ENCODE measurements at regions of chr11 and their contacts with region 1.

Region 1: DNA sequence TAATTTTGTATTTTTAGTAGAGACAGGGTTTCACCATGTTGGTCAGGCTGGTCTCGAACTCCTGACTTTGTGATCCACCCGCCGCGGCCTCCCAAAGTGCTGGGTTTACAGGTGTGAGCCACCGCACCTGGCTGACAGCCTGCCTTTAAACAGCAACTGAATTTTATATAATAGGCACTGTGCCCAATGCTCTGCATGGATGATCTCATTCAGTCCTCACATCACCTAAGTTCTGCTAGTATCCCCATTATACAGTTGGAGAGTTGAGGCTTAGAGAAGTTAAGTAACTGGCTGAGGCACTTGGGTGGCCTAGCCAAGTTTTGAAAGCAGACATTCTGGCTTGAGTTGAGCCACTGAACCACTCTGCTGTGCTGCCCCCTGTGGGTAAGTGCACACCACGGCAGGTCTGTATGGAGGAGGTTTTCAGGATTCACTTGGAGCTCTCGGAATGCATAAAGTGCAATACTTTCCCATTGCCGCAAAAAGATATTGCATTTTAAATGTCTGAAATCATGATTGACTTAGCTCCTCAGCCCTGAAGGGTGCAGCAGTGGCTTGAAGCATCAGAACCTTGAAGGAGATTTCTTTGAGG is 112.4 kb downstream of the LDLRAD3 start:
- DNase-seq: peak; percentile 58
- H3K4me3 ChIP-seq: no peak overlapping the region
- H3K27ac ChIP-seq: no peak overlapping the region
- H3K4me1 ChIP-seq: peaks cover 18% of the 10 kb centered on the region
- H3K27me3 ChIP-seq: no peaks in the 10 kb centered on the region
- CTCF ChIP-seq: peak; percentile 69 to 73
- POLR2A ChIP-seq: no peak

Region 2: GRCh38 chr11:35907648-35908431 is 148.4 kb before region 1 on chr11:
- CTCF ChIA-PET with region 1: no interaction called
- POLR2A ChIA-PET with region 1: no interaction called
- dilution Hi-C with region 1: no loop called
- intact Hi-C with region 1: no loop called
- DNase-seq: peak; percentile 82
- H3K4me3 ChIP-seq: no peak overlapping the region
- H3K27ac ChIP-seq: peak overlapping the region; percentile 16
- H3K4me1 ChIP-seq: peaks cover 26% of the 10 kb centered on the region
- H3K27me3 ChIP-seq: no peaks in the 10 kb centered on the region
- CTCF ChIP-seq: no peak
- POLR2A ChIP-seq: no peak

Region 3: GRCh38 chr11:36041988-36042611 is 14.2 kb before region 1 on chr11:
- CTCF ChIA-PET with region 1: interaction called, 25 read pairs
- POLR2A ChIA-PET with region 1: interaction called, 4 read pairs
- dilution Hi-C with region 1: no loop called
- intact Hi-C with region 1: no loop called
- DNase-seq: peak; percentile 29
- H3K4me3 ChIP-seq: no peak overlapping the region
- H3K27ac ChIP-seq: no peak overlapping the region
- H3K4me1 ChIP-seq: no peaks in the 10 kb centered on the region
- H3K27me3 ChIP-seq: no peaks in the 10 kb centered on the region
- CTCF ChIP-seq: peak; percentile 44 to 45
- POLR2A ChIP-seq: no peak

Region 4: GRCh38 chr11:36116161-36116560 is 59.9 kb after region 1 on chr11:
- CTCF ChIA-PET with region 1: interaction called, 6 read pairs
- POLR2A ChIA-PET with region 1: no interaction called
- dilution Hi-C with region 1: no loop called
- intact Hi-C with region 1: loop called (anchors 1 kb)
- DNase-seq: peak; percentile 88
- H3K4me3 ChIP-seq: no peak overlapping the region
- H3K27ac ChIP-seq: peak overlapping the region; percentile 76
- H3K4me1 ChIP-seq: peaks cover 26% of the 10 kb centered on the region
- H3K27me3 ChIP-seq: no peaks in the 10 kb centered on the region
- CTCF ChIP-seq: no peak
- POLR2A ChIP-seq: no peak

Region 5: DNA sequence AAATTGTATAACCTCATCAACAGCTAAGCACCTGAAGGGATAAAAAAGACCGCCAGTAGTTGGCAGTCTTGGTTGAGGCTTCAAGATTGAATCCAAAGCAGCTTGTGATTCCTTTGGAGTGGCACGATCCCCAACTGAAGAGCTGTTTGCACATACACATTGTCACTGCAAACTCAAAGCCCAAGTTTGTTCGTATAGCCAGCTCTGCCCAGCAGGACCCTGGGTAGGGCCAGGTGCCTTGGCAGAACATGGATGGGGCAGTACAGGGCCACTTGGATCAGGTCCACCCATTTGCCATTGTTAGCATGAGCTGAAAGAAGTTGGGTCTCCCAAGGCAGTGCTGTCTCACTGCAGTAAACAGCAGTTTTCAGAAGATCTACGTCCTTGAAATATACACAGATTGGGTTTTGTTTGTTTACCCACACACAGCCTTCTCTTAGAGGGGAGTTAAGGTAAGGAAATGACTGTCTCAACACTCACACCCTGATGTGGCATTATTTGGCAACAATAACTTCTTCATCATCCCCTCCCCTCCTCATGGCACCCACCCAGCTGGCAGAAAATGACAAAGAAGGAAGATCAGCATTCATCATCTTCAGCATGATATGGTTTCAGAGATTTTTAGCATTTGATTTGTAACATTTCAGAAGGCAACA is 100.0 kb after region 1 on chr11:
- CTCF ChIA-PET with region 1: interaction called, 11 read pairs
- POLR2A ChIA-PET with region 1: no interaction called
- dilution Hi-C with region 1: no loop called
- intact Hi-C with region 1: no loop called
- DNase-seq: peak; percentile 70
- H3K4me3 ChIP-seq: no peak overlapping the region
- H3K27ac ChIP-seq: peak overlapping the region; percentile 75
- H3K4me1 ChIP-seq: peaks cover 28% of the 10 kb centered on the region
- H3K27me3 ChIP-seq: no peaks in the 10 kb centered on the region
- CTCF ChIP-seq: no peak
- POLR2A ChIP-seq: no peak

Region 6: GRCh38 chr11:36167073-36167472 is 110.8 kb after region 1 on chr11:
- CTCF ChIA-PET with region 1: no interaction called
- POLR2A ChIA-PET with region 1: no interaction called
- dilution Hi-C with region 1: no loop called
- intact Hi-C with region 1: no loop called
- DNase-seq: no peak
- H3K4me3 ChIP-seq: no peak overlapping the region
- H3K27ac ChIP-seq: no peak overlapping the region
- H3K4me1 ChIP-seq: peaks cover 25% of the 10 kb centered on the region
- H3K27me3 ChIP-seq: no peaks in the 10 kb centered on the region
- CTCF ChIP-seq: no peak
- POLR2A ChIP-seq: no peak

Region 7: DNA sequence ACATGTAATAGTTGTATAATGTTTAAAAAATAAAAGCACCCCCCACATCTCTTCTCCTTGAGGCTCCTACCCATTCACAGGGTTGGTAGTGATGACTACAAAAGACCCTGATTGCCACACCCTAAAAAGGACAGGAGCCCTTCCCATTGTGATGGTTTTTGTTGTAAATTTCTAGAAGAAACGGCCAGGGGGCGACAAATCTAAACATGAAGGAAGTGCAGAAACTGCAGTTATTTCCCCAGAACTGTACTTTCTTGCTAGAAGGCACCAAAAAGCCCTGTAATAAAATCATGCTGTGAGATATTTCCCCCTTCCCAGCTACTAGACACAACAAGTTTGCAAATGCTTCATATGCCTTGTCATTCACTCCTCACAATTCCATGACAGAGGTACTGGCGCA is 250.6 kb after region 1 on chr11:
- CTCF ChIA-PET with region 1: no interaction called
- POLR2A ChIA-PET with region 1: no interaction called
- dilution Hi-C with region 1: no loop called
- intact Hi-C with region 1: no loop called
- DNase-seq: no peak
- H3K4me3 ChIP-seq: no peak overlapping the region
- H3K27ac ChIP-seq: no peak overlapping the region
- H3K4me1 ChIP-seq: no peaks in the 10 kb centered on the region
- H3K27me3 ChIP-seq: peaks cover 0 to 2% of the 10 kb centered on the region in 2 experiments
- CTCF ChIP-seq: peak in 1 of 2 donors; percentile 29
- POLR2A ChIP-seq: no peak

Measured in endothelial cell of umbilical vein (primary cell).